A673 (cell line): ENCODE measurements at regions of chr13 and their contacts with region 1.

Region 1: DNA sequence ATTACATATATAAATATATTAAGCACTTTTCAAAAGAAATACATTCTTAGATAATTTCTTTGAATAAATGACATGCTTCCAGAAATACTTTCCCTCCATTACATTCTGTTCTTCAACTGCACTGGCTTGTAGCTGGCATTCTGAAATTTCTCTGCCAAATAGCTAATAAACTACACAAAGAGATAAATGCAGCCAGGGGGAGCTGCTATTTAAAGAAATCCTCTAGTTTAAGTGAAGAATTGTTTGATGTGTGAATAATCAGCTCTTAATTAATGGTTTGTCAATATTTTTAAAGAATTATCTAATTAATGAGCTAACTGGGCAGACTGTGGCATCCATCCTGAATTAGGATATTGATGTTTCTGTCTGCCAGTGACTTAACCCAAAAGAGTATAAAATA is 30.7 kb downstream of the SLC7A1 start:
- DNase-seq: no peak
- H3K4me3 ChIP-seq: no peak overlapping the region
- H3K27ac ChIP-seq: no peak overlapping the region
- H3K4me1 ChIP-seq: peaks cover 36% of the 10 kb centered on the region
- H3K27me3 ChIP-seq: no peaks in the 10 kb centered on the region
- CTCF ChIP-seq: peak; percentile 4; the same call in 1 of the 2 replicates

Region 2: GRCh38 chr13:29452773-29453616 is 111.8 kb before region 1 on chr13:
- CTCF ChIA-PET with region 1: no interaction called
- POLR2A ChIA-PET with region 1: no interaction called
- intact Hi-C with region 1: no loop called
- DNase-seq: peak; percentile 25
- H3K4me3 ChIP-seq: no peak overlapping the region
- H3K27ac ChIP-seq: no peak overlapping the region
- H3K4me1 ChIP-seq: peaks cover 7% of the 10 kb centered on the region
- H3K27me3 ChIP-seq: peaks cover 5% of the 10 kb centered on the region
- CTCF ChIP-seq: no peak

Region 3: DNA sequence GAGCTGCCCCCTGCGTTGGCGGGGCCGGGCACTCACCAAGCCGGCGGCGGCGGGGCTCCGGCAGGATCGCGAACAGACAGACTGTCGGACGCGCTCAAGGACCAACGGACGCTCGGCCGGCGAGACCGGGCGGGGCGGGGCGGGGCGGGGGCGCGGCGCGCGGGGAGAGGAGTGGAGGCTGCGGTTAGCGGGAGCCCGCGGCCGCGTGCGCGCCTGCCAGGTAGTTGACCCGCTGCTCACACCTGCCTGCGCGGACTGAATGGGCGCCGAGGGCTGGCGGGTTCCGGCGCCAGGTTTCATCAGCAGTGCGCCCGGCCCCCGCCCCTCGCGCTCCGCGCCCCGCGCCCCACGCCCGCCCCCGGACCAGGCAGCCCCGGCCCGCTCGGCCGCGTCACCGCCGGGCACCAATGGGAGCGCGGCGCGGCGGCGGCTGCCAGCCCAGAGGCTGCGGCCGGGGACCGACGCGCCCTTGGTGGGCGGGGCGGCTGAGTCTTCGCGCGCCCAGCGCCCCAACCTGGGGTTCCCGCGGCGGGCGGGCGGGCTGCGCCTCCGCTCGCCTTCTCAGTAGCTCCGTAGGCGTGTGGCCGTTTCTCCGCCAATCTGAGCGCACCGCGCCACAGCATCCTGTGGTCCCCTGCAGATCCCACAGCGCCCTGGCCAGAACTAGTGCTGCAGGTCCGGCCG is 30.7 kb after region 1 on chr13 and contains the start of gene SLC7A1:
- CTCF ChIA-PET with region 1: no interaction called
- POLR2A ChIA-PET with region 1: no interaction called
- intact Hi-C with region 1: loop called (anchors 5 kb)
- DNase-seq: peak; percentile 92
- H3K4me3 ChIP-seq: peak within 1 kb of the TSS; percentile 93
- H3K27ac ChIP-seq: peak within 1 kb of the TSS; percentile 98
- H3K4me1 ChIP-seq: peaks cover 16% of the 10 kb centered on the region
- H3K27me3 ChIP-seq: no peaks in the 10 kb centered on the region
- CTCF ChIP-seq: no peak
- total RNA-seq, gene SLC7A1: 81.6 and 101 TPM in 2 replicates